BJ (cell line): ENCODE measurements at regions of chr14 and their contacts with region 1.

Region 1: GRCh38 chr14:29681316-29681715 is 246.3 kb downstream of the PRKD1 start:
- DNase-seq: no peak
- H3K4me3 ChIP-seq: no peak overlapping the region
- H3K27me3 ChIP-seq: no peaks in the 10 kb centered on the region
- CTCF ChIP-seq: no peak

Region 2: DNA sequence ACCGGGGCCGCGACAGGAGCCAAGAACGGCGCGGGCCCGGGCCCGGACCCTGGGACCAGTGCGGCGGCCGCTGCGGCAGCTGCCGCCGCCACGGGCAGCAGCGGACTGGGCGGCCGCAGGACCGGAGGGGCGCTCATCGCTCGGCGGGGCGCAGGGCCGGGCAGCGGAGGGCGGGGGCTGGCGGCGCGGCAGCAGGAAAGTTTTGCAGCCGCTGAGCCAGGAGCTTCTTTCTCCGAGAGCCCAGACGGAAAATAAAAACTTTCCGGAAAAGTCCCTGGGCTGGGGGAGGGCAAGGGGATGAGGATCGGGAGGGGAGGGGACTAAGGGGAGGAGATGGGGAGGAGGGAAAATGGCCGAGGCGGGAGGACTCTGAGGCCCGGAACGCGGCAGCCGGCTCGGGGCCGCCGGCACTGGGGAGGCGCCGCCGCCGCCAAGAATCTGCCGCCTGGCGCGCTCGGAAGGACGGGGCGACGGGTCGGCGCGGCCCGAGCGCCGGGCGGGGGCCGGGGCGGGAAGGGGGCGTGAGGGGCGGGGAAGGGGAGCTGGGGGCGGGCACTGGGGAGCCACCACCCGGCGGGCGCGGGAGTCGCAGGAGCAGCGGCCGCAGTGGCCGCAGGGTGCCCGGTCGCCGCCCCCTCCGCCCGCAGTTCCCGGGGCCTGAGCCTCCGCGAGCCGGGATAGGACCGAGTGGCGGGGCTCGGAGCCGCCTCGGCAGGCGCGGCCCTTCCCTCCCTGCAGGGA is 246.2 kb after region 1 on chr14 and contains the start of gene PRKD1:
- CTCF ChIA-PET with region 1: no interaction called
- POLR2A ChIA-PET with region 1: interaction called, 16 read pairs
- DNase-seq: no peak
- H3K4me3 ChIP-seq: peak within 1 kb of the TSS; percentile 62
- H3K27me3 ChIP-seq: no peaks in the 10 kb centered on the region
- CTCF ChIP-seq: 0 out of 2 replicates have a peak, but pooled peaks have one; percentile 11
- polyA plus RNA-seq, gene PRKD1: 19.8 and 23.6 TPM in 2 replicates